Naive thymus-derived CD4-positive, alpha-beta T cell (primary cell): ENCODE measurements at regions of chr1 and their contacts with region 1.

Region 1: GRCh38 chr1:174999216-174999925 is 376 bp upstream of the CACYBP start:
- DNase-seq: peak; percentile 89 to 99 (median 98)
- ATAC-seq: peak; percentile 88
- H3K4me3 ChIP-seq: peak overlapping the region; percentile 72
- H3K4me3 Mint-ChIP-seq: no peak overlapping the region
- H3K27ac ChIP-seq: peak overlapping the region; percentile 99
- H3K27ac Mint-ChIP-seq: no peak overlapping the region
- H3K4me1 ChIP-seq: peaks cover 10 to 18% of the 10 kb centered on the region in 2 donors
- H3K4me1 Mint-ChIP-seq: peaks cover 34 to 43% (median 39%) of the 10 kb centered on the region in 7 donors
- H3K27me3 ChIP-seq: no peaks in the 10 kb centered on the region
- H3K27me3 Mint-ChIP-seq: no peaks in the 10 kb centered on the region

Region 2: GRCh38 chr1:173714759-173715537 is 1284.4 kb before region 1 on chr1 and contains the start of gene KLHL20:
- CTCF ChIA-PET with region 1: no interaction called
- POLR2A ChIA-PET with region 1: interaction called, 3 read pairs
- intact Hi-C with region 1: loop called in 1 of 2 experiments (anchors 1 kb)
- DNase-seq: peak; percentile 60 to 92 (median 89)
- ATAC-seq: peak; percentile 98
- H3K4me3 ChIP-seq: peak within 1 kb of the TSS; percentile 77
- H3K4me3 Mint-ChIP-seq: peak within 1 kb of the TSS; percentile 90 to 100 (median 96)
- H3K27ac ChIP-seq: peak within 1 kb of the TSS; percentile 78
- H3K27ac Mint-ChIP-seq: peak within 1 kb of the TSS; percentile 89 to 99 (median 94)
- H3K4me1 ChIP-seq: peaks cover 11 to 18% of the 10 kb centered on the region in 2 donors
- H3K4me1 Mint-ChIP-seq: peaks cover 14 to 48% (median 35%) of the 10 kb centered on the region in 7 donors
- H3K27me3 ChIP-seq: no peaks in the 10 kb centered on the region
- H3K27me3 Mint-ChIP-seq: peaks cover 14 to 32% (median 19%) of the 10 kb centered on the region in 5 donors
- total RNA-seq, gene KLHL20: 28.3 to 40.9 (median 32.8) TPM

Region 3: DNA sequence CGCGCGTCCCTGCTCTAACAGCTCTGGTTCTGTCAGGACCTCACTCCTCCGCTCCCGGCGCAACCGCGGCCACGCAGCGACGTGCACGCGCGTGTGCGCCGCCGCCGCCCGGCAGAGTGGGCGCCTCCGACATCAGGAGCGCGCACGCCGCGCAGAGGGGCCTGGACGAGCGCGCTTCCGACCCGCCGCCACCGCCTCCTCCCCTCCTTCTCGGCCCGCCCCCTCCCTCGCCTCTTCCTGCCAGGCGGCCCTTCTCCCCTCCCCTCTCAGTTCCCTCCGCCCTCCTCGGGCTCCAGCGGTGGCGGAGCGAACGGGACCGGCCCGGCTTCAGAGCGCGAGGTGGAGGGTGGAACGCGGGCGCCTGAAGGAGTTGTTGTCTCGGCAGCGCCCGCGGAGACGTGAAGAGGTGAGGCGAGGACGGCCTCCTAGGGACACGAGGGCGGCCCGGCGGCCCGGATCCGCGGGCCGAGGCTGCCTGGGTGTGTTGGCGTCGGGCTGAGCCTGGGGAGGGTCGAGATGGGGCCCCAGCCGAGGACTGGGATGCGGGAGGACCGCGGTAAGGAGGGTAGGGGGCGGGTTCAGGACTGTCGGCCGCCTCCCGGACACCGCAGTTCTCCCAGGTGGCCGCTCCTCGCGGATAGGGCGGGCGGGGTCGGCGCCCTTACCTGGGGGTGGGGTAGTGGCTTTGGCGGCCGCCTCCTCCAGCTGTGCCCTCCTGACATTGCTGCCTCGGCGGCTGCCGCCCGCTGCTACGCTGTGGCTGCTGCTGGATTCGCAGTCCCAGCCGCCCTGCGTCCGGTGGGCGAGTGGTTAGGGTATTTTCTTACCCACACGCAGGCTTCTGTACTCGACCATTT is 839.9 kb before region 1 on chr1 and contains the start of gene RABGAP1L:
- CTCF ChIA-PET with region 1: no interaction called
- POLR2A ChIA-PET with region 1: no interaction called
- intact Hi-C with region 1: loop called in 1 of 2 experiments (anchors 1 kb)
- DNase-seq: peak; percentile 87 to 95 (median 93)
- ATAC-seq: peak; percentile 96
- H3K4me3 ChIP-seq: peak within 1 kb of the TSS; percentile 72
- H3K4me3 Mint-ChIP-seq: peak within 1 kb of the TSS; percentile 92 to 100 (median 96)
- H3K27ac ChIP-seq: peak within 1 kb of the TSS; percentile 87
- H3K27ac Mint-ChIP-seq: peak within 1 kb of the TSS; percentile 86 to 98 (median 98)
- H3K4me1 ChIP-seq: peaks cover 9 to 20% of the 10 kb centered on the region in 2 donors
- H3K4me1 Mint-ChIP-seq: peaks cover 31 to 59% (median 53%) of the 10 kb centered on the region in 7 donors
- H3K27me3 ChIP-seq: no peaks in the 10 kb centered on the region
- H3K27me3 Mint-ChIP-seq: no peaks in the 10 kb centered on the region
- total RNA-seq, gene RABGAP1L: 51.9 to 97.4 (median 74.3) TPM

Region 4: DNA sequence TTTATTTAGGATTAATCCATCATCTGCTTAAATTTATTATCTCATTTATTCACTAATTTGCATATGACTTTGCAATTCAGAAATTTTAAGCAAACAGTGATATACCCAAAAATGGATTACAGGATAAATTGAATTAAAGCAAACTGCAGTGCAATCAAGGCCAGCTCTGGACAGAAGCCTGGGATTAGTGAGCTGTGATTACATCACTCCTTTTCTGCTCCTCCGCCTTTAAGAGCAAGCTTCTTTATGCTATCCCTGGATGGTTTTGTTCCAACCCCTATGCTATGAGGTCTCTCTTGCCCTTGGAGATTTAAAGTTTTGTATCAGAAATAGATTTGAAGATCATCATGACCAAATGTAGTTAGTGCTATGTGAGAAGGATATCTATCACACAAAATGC is 519.0 kb before region 1 on chr1:
- CTCF ChIA-PET with region 1: no interaction called
- POLR2A ChIA-PET with region 1: no interaction called
- intact Hi-C with region 1: no loop called
- DNase-seq: no peak
- ATAC-seq: no peak
- H3K4me3 ChIP-seq: no peak overlapping the region
- H3K4me3 Mint-ChIP-seq: no peak overlapping the region
- H3K27ac ChIP-seq: no peak overlapping the region
- H3K27ac Mint-ChIP-seq: no peak overlapping the region
- H3K4me1 ChIP-seq: no peaks in the 10 kb centered on the region
- H3K4me1 Mint-ChIP-seq: peaks cover 0 to 5% (median 0%) of the 10 kb centered on the region in 7 donors
- H3K27me3 ChIP-seq: no peaks in the 10 kb centered on the region
- H3K27me3 Mint-ChIP-seq: no peaks in the 10 kb centered on the region

Region 5: GRCh38 chr1:174800216-174800851 is 199.0 kb before region 1 on chr1:
- CTCF ChIA-PET with region 1: interaction called, 10 read pairs
- POLR2A ChIA-PET with region 1: interaction called, 66 read pairs
- intact Hi-C with region 1: loop called (anchors 1 kb)
- DNase-seq: peak in 4 of 9 donors; percentile 2 to 29 (median 16)
- ATAC-seq: peak; percentile 7
- H3K4me3 ChIP-seq: peak overlapping the region; percentile 73
- H3K4me3 Mint-ChIP-seq: no peak overlapping the region
- H3K27ac ChIP-seq: peak overlapping the region; percentile 81
- H3K27ac Mint-ChIP-seq: no peak overlapping the region
- H3K4me1 ChIP-seq: peaks cover 7 to 9% of the 10 kb centered on the region in 2 donors
- H3K4me1 Mint-ChIP-seq: peaks cover 0 to 18% (median 6%) of the 10 kb centered on the region in 7 donors
- H3K27me3 ChIP-seq: no peaks in the 10 kb centered on the region
- H3K27me3 Mint-ChIP-seq: no peaks in the 10 kb centered on the region

Region 6: GRCh38 chr1:174953285-174954072 is 45.9 kb before region 1 on chr1:
- CTCF ChIA-PET with region 1: no interaction called
- POLR2A ChIA-PET with region 1: interaction called, 10 read pairs
- intact Hi-C with region 1: no loop called
- DNase-seq: no peak
- ATAC-seq: no peak
- H3K4me3 ChIP-seq: no peak overlapping the region
- H3K4me3 Mint-ChIP-seq: no peak overlapping the region
- H3K27ac ChIP-seq: no peak overlapping the region
- H3K27ac Mint-ChIP-seq: peak overlapping the region in 2 of 9 donors; percentile 1 to 65
- H3K4me1 ChIP-seq: peaks cover 0 to 14% of the 10 kb centered on the region in 2 donors
- H3K4me1 Mint-ChIP-seq: peaks cover 21 to 35% (median 28%) of the 10 kb centered on the region in 7 donors
- H3K27me3 ChIP-seq: no peaks in the 10 kb centered on the region
- H3K27me3 Mint-ChIP-seq: no peaks in the 10 kb centered on the region

Region 7: DNA sequence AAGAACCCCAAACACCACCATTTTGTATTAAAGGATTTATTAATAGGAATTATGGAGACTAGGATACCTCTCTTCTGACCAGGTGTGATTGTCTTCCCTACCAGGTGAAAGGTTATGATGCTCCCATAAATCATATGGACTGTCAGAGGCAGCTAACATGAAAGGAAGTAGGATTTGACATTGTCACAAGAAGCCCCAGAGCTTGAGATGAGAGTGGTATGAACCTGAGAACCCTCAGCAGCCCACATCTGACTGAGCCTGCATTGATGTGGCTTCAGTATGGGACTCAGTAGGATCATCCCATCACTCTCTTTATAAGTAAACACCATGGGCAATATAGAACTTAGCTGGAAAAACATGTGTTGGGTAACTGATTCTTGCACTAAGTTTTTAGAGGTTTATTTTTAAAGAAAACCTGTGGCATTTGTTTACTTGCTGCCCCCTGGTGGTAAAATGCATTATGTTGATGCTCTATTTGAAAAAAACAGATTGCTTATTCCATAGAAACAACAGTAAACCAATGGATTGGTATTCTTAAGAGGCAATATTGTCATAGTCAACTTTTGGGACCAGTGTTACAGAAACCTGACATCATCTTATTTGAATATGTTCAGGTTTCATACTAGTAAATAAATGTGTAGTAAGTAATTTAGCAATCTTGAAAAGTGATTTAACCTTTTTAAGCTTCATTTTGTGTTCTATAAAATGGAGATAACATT is 16.2 kb before region 1 on chr1:
- CTCF ChIA-PET with region 1: interaction called, 18 read pairs
- POLR2A ChIA-PET with region 1: interaction called, 31 read pairs
- intact Hi-C with region 1: loop called in 1 of 2 experiments (anchors 1 kb)
- DNase-seq: peak in 7 of 9 donors; percentile 50 to 69 (median 58)
- ATAC-seq: peak; percentile 41
- H3K4me3 ChIP-seq: no peak overlapping the region
- H3K4me3 Mint-ChIP-seq: no peak overlapping the region
- H3K27ac ChIP-seq: no peak overlapping the region
- H3K27ac Mint-ChIP-seq: peak overlapping the region in 7 of 9 donors; percentile 19 to 91 (median 48)
- H3K4me1 ChIP-seq: peaks cover 0 to 9% of the 10 kb centered on the region in 2 donors
- H3K4me1 Mint-ChIP-seq: peaks cover 9 to 54% (median 40%) of the 10 kb centered on the region in 7 donors
- H3K27me3 ChIP-seq: no peaks in the 10 kb centered on the region
- H3K27me3 Mint-ChIP-seq: no peaks in the 10 kb centered on the region

Region 8: DNA sequence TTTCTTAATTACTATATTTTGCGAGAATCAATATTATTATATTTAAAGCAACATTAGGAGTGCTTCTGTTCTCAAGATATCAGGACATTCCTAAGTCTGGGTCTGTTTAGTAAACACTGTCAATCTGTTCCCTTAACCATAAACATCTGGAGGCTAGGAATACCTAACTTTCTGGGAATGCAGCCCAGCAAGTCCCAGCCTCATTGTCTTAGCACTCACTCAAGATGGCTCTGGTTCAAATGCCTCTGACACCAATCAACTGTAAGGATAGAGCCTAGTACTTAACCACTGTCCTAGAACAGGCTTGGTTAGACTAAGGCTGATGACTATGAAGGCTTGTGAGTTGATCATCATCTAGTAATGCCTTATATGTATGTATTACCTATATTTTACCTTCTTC is 129.8 kb after region 1 on chr1:
- CTCF ChIA-PET with region 1: no interaction called
- POLR2A ChIA-PET with region 1: no interaction called
- intact Hi-C with region 1: loop called in 1 of 2 experiments (anchors 1 kb)
- DNase-seq: no peak
- ATAC-seq: no peak
- H3K4me3 ChIP-seq: no peak overlapping the region
- H3K4me3 Mint-ChIP-seq: no peak overlapping the region
- H3K27ac ChIP-seq: no peak overlapping the region
- H3K27ac Mint-ChIP-seq: no peak overlapping the region
- H3K4me1 ChIP-seq: no peaks in the 10 kb centered on the region
- H3K4me1 Mint-ChIP-seq: peaks cover 0 to 3% (median 0%) of the 10 kb centered on the region in 7 donors
- H3K27me3 ChIP-seq: no peaks in the 10 kb centered on the region
- H3K27me3 Mint-ChIP-seq: peaks cover 0 to 5% (median under 1%) of the 10 kb centered on the region in 5 donors